Activated naive CD4-positive, alpha-beta T cell treated with anti-CD3 and anti-CD28 coated beads for 36 hours (primary cell): ENCODE measurements at regions of chr15 and their contacts with region 1.

Region 1: DNA sequence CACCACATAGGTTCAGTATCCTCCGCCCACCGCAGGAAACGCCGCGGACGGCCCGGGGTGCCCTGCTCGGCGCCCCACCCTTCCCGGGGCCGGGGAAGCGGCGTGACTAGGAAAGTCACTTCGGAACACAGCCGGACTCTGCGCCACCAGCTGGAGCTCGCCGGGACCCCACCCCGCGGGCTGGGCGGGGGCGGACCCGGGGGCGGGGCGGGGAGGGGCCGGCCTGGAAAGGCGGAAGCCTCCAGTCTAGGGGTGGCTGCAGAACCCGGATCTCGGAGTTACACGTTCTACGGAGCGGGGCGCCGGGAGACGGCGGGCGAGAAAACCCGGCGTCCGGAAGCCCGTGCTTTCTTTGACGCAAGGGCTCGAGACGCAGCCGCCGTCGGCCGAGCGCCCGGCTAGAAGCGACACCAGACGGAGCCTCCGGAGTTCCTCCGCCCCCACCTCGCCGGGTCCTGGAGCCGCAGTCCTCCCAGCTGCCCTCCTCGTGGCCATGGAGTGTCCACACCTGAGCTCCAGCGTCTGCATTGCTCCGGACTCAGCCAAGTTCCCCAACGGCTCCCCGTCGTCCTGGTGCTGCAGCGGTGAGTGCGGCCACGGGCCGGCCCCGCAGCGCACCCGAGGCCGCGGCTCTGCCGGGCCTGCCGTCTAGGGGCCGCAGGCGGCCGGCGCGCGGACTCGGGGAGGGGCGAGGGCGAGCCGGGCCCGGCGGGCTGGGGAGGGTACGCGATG is at the start of gene USP3:
- DNase-seq: peak; percentile 94
- H3K4me3 Mint-ChIP-seq: peak within 1 kb of the TSS; percentile 85
- H3K27ac Mint-ChIP-seq: peak within 1 kb of the TSS; percentile 97
- H3K4me1 Mint-ChIP-seq: peaks cover 78% of the 10 kb centered on the region
- H3K27me3 Mint-ChIP-seq: no peaks in the 10 kb centered on the region
- total RNA-seq, gene USP3: 49.9 to 52.2 TPM

Region 2: GRCh38 chr15:63212050-63213004 is 292.1 kb before region 1 on chr15:
- CTCF ChIA-PET with region 1: interaction called, 4 read pairs
- intact Hi-C with region 1: loop called (anchors 5 kb)
- DNase-seq: peak; percentile 29
- H3K4me3 Mint-ChIP-seq: peak overlapping the region; percentile 57
- H3K27ac Mint-ChIP-seq: peak overlapping the region; percentile 97
- H3K4me1 Mint-ChIP-seq: peaks cover 89% of the 10 kb centered on the region
- H3K27me3 Mint-ChIP-seq: no peaks in the 10 kb centered on the region

Region 3: GRCh38 chr15:63473999-63474809 is 30.2 kb before region 1 on chr15:
- CTCF ChIA-PET with region 1: interaction called, 5 read pairs
- intact Hi-C with region 1: loop called (anchors 1 kb)
- DNase-seq: peak; percentile 88
- H3K4me3 Mint-ChIP-seq: no peak overlapping the region
- H3K27ac Mint-ChIP-seq: peak overlapping the region; percentile 89
- H3K4me1 Mint-ChIP-seq: peaks cover 53% of the 10 kb centered on the region
- H3K27me3 Mint-ChIP-seq: no peaks in the 10 kb centered on the region

Region 4: DNA sequence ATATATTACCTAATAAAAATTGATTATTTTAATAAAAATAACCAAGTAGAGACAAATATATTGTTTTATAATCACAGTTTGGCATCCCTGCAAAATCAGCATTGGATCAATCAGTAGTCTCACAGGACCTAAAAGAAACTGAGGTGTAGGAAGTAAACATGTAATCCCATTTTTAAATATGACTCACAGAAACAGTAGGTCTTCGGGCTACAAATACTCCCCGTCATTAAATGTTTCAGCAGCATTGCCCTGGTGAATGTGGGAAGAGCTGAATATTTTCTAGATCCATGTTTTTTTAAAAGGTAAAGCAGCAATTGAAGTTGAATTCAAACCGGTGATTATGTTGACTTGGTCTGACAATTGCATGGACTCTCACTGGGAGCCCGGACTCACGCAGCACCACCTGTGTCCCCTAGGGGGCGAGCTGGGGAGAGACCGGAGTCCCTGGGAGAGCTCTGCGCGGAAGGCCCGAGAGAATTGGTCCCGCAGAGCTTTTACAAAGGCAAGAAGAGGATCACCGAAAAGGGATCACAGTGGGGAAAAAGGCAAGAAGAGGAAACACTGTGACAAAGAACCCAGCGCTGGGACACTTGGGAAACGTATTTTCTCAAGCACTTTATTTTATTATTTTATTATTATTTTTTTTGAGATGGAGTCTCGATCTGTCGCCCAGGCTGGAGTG is 17.2 kb before region 1 on chr15:
- CTCF ChIA-PET with region 1: interaction called, 16 read pairs
- intact Hi-C with region 1: loop called (anchors 1 kb)
- DNase-seq: peak; percentile 95
- H3K4me3 Mint-ChIP-seq: peak overlapping the region; percentile 51
- H3K27ac Mint-ChIP-seq: no peak overlapping the region
- H3K4me1 Mint-ChIP-seq: peaks cover 71% of the 10 kb centered on the region
- H3K27me3 Mint-ChIP-seq: no peaks in the 10 kb centered on the region

Region 5: GRCh38 chr15:63560741-63561448 is 56.5 kb after region 1 on chr15:
- CTCF ChIA-PET with region 1: no interaction called
- intact Hi-C with region 1: no loop called
- DNase-seq: peak; percentile 78
- H3K4me3 Mint-ChIP-seq: no peak overlapping the region
- H3K27ac Mint-ChIP-seq: peak overlapping the region; percentile 55
- H3K4me1 Mint-ChIP-seq: peaks cover 40% of the 10 kb centered on the region
- H3K27me3 Mint-ChIP-seq: no peaks in the 10 kb centered on the region

Region 6: GRCh38 chr15:63600616-63601025 is 96.2 kb after region 1 on chr15:
- CTCF ChIA-PET with region 1: interaction called, 8 read pairs
- intact Hi-C with region 1: loop called (anchors 1 kb)
- DNase-seq: peak; percentile 87
- H3K4me3 Mint-ChIP-seq: peak overlapping the region; percentile 90
- H3K27ac Mint-ChIP-seq: peak overlapping the region; percentile 93
- H3K4me1 Mint-ChIP-seq: peaks cover 54% of the 10 kb centered on the region
- H3K27me3 Mint-ChIP-seq: no peaks in the 10 kb centered on the region

Region 7: GRCh38 chr15:64093627-64094417 is 589.4 kb after region 1 on chr15 and contains the start of gene CIAO2A:
- CTCF ChIA-PET with region 1: no interaction called
- intact Hi-C with region 1: loop called (anchors 1 kb)
- DNase-seq: peak; percentile 99
- H3K4me3 Mint-ChIP-seq: peak within 1 kb of the TSS; percentile 98
- H3K27ac Mint-ChIP-seq: peak within 1 kb of the TSS; percentile 97
- H3K4me1 Mint-ChIP-seq: peaks cover 62% of the 10 kb centered on the region
- H3K27me3 Mint-ChIP-seq: no peaks in the 10 kb centered on the region
- total RNA-seq, gene CIAO2A: 105 TPM